Right cardiac atrium (tissue), 5 donors: ENCODE measurements at regions of chr10 and their contacts with region 1.

Region 1: DNA sequence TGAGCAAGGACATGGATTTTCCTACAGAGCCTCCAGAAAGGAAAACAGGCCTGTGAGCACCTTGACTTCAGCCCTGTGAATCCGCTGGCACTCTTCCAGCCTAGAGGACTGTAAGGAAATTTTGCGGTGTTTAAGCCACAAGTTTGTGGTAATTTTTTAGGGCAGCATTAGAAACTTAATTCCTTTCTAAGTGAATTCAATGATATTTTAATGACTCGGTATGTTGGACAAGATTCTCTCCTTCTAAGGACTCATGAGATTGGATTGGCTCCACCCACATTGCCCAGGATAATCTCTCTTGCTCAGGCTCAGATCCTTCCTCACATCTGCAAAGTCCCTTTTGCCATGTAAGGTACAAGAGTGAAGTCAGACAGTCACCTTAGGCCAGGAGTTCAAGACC is 4.5 kb downstream of the LYZL2 start:
- DNase-seq: no peak
- ATAC-seq: no peak
- H3K4me3 ChIP-seq: no peak overlapping the region
- H3K27ac ChIP-seq: no peak overlapping the region
- H3K4me1 ChIP-seq: no peaks in the 10 kb centered on the region
- H3K27me3 ChIP-seq: no peaks in the 10 kb centered on the region

Region 2: GRCh38 chr10:29297678-29298077 is 1327.4 kb before region 1 on chr10:
- intact Hi-C with region 1: loop called in 1 of 4 experiments (anchors 10 kb)
- DNase-seq: no peak
- ATAC-seq: no peak
- H3K4me3 ChIP-seq: no peak overlapping the region
- H3K27ac ChIP-seq: no peak overlapping the region
- H3K4me1 ChIP-seq: no peaks in the 10 kb centered on the region
- H3K27me3 ChIP-seq: no peaks in the 10 kb centered on the region

Region 3: DNA sequence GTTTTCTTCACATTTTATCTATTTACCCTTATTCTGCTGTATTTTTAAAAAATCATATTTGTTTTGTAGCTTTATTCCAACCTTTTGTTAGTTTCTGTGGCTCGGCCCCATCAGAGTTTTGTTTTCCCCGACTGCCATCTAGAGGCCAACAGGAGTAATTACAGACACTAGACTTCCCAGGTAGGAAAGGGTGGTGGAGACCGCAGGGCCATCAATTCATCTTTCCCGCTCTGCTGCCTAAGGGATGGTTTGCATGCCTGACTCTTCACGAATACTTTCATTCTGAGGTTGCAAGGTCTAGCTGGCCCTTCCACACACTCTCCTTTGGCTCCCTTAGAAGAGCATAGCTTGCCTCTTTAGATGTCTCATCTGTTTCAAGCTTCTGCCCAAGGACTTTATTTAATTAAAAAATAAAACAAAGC is 33.8 kb before region 1 on chr10:
- intact Hi-C with region 1: no loop called
- DNase-seq: no peak
- ATAC-seq: peak in 1 of 2 donors; percentile 51
- H3K4me3 ChIP-seq: no peak overlapping the region
- H3K27ac ChIP-seq: no peak overlapping the region
- H3K4me1 ChIP-seq: no peaks in the 10 kb centered on the region
- H3K27me3 ChIP-seq: no peaks in the 10 kb centered on the region